Right ventricle myocardium inferior (tissue), 1 donor: ENCODE measurements at regions of chr7 and their contacts with region 1.

Region 1: GRCh38 chr7:125670926-125671572 is 741.4 kb upstream of the POT1 start:
- DNase-seq: no peak
- ATAC-seq: no peak

Region 2: DNA sequence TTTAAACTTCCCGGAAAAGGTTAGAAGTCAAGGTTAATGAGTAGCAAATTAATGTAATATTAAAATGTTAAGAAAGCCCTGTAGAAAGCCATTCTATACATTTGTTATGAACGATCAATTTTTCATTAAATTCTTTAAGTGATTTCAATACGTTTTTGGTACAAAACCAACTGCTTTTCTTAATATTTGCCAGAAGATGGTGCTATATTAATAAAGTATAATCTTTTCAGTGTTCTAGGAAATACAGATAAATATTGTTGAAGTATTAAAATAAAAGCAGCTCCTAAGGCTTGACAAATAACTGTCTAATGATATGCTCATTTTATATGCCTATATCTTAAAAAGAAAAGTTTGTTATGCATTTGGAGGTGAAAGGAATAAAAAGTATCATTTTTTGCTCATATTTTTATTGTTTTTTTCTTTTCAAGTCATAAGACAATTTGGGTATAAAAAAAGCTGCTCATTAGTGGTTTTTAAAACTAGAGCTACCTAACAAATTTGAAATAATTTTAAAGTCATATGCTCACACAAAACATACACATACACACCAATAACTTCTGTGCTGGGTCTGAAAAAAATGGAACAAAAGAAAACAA is 611.1 kb before region 1 on chr7:
- intact Hi-C with region 1: loop called (anchors 5 kb)
- DNase-seq: no peak
- ATAC-seq: no peak